ENCODE measurements at regions of chr3 and their contacts with region 1.

Region 1: DNA sequence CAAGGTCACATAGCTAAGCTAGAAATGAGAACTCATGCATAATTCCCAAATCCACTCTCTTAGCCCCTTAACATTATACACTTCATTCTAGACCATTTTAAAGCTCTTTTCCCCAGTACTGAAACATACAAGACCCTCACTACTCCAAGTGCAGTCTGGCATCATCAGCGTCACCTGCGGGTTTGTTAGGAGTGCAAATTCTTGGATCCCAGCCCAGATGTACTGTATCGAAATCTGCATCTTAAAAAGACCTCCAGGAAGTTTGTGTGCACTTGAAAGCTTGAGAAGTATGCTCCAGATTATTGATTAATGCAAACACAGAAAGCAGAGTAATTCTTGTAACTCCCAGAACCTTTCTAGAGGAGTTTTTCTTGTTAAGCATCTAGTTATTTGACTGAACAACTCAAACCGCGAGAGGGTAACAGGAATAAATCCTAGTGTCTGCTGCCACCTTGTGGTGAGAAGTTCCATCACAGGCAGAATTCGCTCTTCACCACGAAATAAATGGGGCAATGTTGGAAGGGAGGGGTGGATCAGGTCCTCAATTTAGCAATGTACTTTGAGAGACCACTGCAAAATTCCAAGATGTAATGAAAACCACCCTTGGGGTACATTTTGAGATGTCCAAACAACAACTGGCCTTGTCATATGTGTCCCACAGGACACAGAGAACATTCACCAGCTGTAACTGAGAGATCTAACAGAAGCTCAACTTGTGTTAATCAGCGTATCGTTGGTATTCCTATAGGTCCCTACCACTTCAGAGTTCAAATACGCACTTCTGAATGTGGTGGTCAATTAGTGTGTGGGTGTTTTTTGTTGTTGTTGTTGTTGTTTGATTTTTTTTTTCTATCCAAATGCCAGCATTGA is 583 bp upstream of the C3orf49 start:
- DNase-seq: peak; percentile 56
- H3K4me3 ChIP-seq: no peak overlapping the region
- H3K27ac ChIP-seq: no peak overlapping the region
- H3K27me3 ChIP-seq: no peaks in the 10 kb centered on the region
- CTCF ChIP-seq: peak; percentile 83

Region 2: DNA sequence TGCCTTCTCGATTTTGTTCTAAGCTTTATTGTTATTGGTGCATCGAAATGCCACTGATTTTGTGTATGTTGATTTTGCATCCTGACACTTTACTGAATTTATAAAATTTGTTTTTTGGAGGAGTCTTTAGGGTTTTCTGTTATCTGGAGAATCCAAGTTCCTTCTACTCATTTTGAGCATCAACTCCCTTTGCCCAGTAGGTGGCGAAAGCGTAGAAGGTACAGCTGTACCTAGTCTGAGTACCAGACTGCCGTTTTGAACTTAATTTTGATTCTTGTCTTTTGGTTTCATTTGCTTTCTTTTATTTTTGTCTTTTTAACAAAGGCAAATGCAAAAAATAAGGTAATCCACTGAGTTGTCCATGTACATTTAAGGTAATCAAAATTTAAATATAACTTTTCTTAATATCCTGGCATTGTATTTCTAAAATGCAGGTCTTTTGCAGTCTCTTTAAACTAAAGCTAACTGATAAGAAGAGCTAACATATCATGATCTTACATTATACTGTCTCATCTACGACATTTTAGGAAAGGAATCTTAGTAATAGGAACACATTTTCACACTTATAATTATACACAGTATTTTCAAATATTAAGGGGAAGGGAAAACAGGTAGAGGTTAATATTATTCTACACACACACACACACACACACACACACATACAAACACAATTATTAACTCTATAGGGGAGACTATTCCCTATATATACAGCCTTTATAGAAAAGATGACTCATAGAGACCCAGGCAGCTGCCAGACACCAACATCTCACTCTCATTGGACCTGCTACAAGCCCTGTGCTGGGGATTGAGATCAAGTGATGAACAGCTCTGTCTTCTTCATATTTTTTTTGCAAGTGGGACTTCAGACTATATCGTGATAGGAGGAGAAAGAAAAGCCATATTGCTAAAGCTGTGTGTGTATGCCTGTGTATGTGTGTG is 468.7 kb before region 1 on chr3:
- in situ Hi-C with region 1: loop called (anchors 25 kb)
- DNase-seq: peak; percentile 64
- H3K4me3 ChIP-seq: no peak overlapping the region
- H3K27ac ChIP-seq: no peak overlapping the region
- H3K27me3 ChIP-seq: no peaks in the 10 kb centered on the region
- CTCF ChIP-seq: peak; percentile 94

Measured in brain microvascular endothelial cell (primary cell).